ENCODE measurements at regions of chr16 and their contacts with region 1.

Region 1: DNA sequence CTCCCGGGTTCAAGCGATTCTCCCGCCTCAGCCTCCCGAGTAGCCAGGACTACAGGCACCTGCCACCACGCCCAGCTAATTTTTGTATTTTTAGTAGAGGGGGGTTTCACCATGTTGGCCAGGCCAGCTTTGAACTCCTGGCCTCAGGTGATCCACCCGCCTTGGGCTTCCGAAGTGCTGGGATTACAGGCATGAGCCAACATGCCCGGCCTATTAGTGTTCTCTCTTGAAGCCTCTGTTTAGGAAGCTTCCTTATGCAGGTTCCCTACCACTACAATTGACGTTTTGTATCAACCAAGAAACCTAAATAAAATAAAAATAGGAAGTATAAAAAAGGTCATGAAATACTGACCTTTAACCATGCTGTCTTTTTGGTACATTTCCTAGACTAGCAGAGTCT is 16.0 kb downstream of the CHST5 start:
- DNase-seq: no peak
- H3K4me3 ChIP-seq: no peak overlapping the region
- H3K27ac ChIP-seq: no peak overlapping the region
- H3K4me1 ChIP-seq: peaks cover 10% of the 10 kb centered on the region
- H3K27me3 ChIP-seq: no peaks in the 10 kb centered on the region
- CTCF ChIP-seq: no peak
- POLR2A ChIP-seq: no peak

Region 2: DNA sequence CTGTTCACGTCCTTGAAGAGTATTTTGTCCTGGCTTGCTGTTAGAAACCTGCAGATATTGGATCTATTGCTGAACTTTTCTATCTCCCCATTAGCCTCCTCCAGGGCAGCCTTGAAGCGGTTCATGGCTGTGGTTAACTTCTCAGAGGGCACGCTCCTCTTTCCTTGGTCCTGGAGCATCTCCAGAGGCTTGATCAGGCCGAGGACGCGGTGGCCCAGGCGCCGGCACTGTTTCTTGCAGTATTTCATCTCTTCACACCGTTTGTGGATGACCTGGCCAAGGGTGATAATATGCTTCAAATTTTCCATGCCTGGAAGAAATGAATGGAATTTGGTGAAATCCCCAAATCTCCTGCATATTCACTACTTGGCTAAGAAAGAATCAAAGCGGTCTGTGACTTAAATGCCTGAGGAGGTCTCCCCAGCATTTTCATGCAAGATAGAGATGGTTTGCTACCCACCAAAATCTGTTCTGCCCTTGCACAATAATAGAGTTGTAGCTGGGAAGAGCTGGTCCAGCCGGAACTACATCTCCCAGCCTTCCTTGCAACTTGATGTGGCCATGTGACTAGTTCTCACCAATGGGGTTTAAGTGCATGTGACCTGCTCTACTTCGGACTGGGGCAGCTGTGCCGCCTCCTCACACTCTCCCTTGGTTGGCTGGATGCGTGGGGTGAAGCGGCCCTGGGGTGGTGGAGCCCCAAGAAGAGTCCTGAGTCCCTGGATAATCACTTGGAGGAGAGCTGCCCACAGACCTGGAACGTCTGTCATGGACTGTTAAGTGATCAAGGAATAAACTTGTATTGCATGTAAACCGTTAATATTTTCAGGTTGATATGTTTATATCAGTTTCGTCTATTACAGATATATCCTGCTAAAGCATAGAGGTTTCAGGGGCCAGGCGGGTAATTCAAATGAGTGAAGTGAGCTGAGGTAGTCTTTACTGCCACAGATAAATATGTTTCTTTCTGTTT is 824.1 kb before region 1 on chr16:
- intact Hi-C with region 1: loop called (anchors 5 kb)
- DNase-seq: peak in 1 of 2 donors; percentile 95
- H3K4me3 ChIP-seq: peak overlapping the region; percentile 35 to 38
- H3K27ac ChIP-seq: peak overlapping the region; percentile 55
- H3K4me1 ChIP-seq: peaks cover 29% of the 10 kb centered on the region
- H3K27me3 ChIP-seq: no peaks in the 10 kb centered on the region
- CTCF ChIP-seq: no peak
- POLR2A ChIP-seq: no peak

Region 3: GRCh38 chr16:75464130-75464918 is 55.6 kb before region 1 on chr16 and contains the start of gene TMEM170A:
- intact Hi-C with region 1: loop called (anchors 10 kb)
- DNase-seq: peak in 1 of 2 donors; percentile 99
- H3K4me3 ChIP-seq: peak within 1 kb of the TSS; percentile 94 to 96
- H3K27ac ChIP-seq: peak within 1 kb of the TSS; percentile 96
- H3K4me1 ChIP-seq: peaks cover 34% of the 10 kb centered on the region
- H3K27me3 ChIP-seq: no peaks in the 10 kb centered on the region
- CTCF ChIP-seq: peak; percentile 99 to 100 (median 100)
- POLR2A ChIP-seq: peak; percentile 51 to 90
- total RNA-seq, gene TMEM170A: 21.9 TPM

Measured in vagina (tissue), 2 donors.